Natural killer cell (primary cell): ENCODE measurements at regions of chr15 and their contacts with region 1.

Region 1: GRCh38 chr15:58475573-58476524 is 44.1 kb downstream of the LIPC start:
- DNase-seq: peak in 1 of 2 donors; percentile 18
- ATAC-seq: peak in 1 of 3 donors; percentile 28
- H3K4me3 ChIP-seq: no peak overlapping the region
- H3K4me3 Mint-ChIP-seq: peak overlapping the region; percentile 78
- H3K27ac ChIP-seq: no peak overlapping the region
- H3K27ac Mint-ChIP-seq: peak overlapping the region; percentile 88 to 91
- H3K4me1 ChIP-seq: peaks cover 68% of the 10 kb centered on the region
- H3K4me1 Mint-ChIP-seq: peaks cover 61 to 74% of the 10 kb centered on the region in 2 donors
- H3K27me3 ChIP-seq: no peaks in the 10 kb centered on the region
- H3K27me3 Mint-ChIP-seq: no peaks in the 10 kb centered on the region
- CTCF ChIP-seq: no peak

Region 2: DNA sequence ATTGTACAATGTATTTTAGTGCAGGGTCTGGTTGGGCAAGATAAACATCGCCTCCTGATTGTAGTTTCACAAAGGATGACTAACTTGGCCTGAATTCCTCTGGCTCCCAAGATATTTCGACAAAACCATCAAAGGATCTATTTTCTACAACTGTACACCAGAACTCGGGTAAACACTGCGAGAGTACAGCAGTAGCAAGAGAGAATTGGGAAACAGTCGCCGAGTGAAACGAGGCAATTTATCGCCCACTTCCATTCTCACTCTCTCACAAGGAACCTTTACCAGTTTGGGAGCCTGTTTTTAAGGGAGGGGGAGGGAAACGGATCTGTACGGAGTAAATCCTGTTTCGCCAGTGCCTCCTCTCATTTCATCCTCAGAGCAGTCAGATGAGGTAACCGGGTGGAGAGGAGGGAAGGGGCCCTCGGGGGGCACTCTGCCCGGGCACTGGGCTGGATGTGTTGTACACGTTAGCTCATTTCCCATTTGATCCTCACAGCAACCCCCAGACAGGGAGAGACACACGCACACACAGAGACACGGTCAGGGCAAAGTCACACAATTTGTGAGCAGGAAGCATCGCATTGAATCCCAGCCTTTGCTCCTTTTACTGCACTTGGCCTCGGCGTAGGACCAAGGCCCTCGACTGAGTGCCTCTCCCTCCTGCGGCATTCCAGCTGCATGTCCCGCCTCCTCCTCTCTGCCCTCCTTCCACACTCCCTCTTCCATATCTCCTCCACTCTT is 76.1 kb after region 1 on chr15:
- intact Hi-C with region 1: loop called (anchors 10 kb)
- DNase-seq: no peak
- ATAC-seq: no peak
- H3K4me3 ChIP-seq: no peak overlapping the region
- H3K4me3 Mint-ChIP-seq: peak overlapping the region; percentile 81
- H3K27ac ChIP-seq: no peak overlapping the region
- H3K27ac Mint-ChIP-seq: peak overlapping the region; percentile 41 to 54
- H3K4me1 ChIP-seq: peaks cover 36% of the 10 kb centered on the region
- H3K4me1 Mint-ChIP-seq: peaks cover 48 to 64% of the 10 kb centered on the region in 2 donors
- H3K27me3 ChIP-seq: no peaks in the 10 kb centered on the region
- H3K27me3 Mint-ChIP-seq: peaks cover 10 to 15% of the 10 kb centered on the region in 2 donors
- CTCF ChIP-seq: no peak